ENCODE measurements at regions of chr15 and their contacts with region 1.

Region 1: DNA sequence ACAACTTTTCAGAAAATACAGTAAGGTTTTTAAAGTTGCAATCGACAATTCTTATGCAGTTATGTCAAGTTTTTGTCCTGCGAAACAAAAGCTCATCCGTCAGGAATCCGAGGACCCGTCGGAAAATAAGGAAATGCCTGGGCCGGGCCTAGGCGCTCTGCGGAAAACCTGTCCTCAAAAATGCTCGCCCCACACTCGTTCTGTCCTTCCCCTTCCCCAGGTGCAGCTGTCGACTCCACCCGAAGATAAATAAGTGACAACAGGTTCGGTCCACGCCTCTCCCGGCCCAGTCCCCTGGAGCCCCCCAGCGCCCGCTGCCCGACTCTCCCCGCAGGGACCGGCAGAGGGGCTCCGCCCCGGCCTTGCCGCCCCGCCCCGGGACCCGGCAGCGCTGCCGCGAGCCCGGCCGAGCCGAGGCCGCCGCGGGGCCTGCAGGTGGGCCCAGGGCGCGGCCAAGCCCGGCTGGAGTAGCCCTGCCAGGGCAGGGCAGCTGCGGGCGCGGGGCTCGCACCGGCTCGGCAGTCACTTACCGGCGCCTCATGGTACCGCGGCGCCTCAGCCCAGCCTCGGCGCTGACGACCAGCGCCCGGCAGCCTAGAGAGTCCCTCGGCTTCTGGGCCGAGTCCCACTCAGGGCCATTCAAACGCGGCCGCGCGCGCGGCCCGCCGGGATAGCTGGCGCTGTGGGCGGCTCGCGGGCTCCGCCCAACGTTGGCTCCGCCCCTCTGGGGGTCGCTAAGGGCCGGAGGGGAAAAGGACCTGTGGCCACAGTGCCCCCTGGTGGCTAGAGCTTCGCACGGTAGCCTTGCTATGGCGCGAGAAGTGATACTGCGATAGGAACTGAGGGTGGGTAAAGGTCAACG is at the start of gene KATNBL1:
- DNase-seq: peak; percentile 95 to 96
- H3K4me3 ChIP-seq: peak within 1 kb of the TSS; percentile 44
- H3K4me3 Mint-ChIP-seq: peak within 1 kb of the TSS; percentile 80
- H3K27ac Mint-ChIP-seq: peak within 1 kb of the TSS; percentile 87
- H3K4me1 ChIP-seq: peaks cover 8% of the 10 kb centered on the region; the same call in 1 of the 2 replicates
- H3K4me1 Mint-ChIP-seq: peaks cover 10% of the 10 kb centered on the region
- H3K27me3 ChIP-seq: no peaks in the 10 kb centered on the region
- H3K27me3 Mint-ChIP-seq: no peaks in the 10 kb centered on the region
- CTCF ChIP-seq: peak; percentile 88 to 93
- total RNA-seq, gene KATNBL1: 22.6 and 25.9 TPM in 2 replicates

Region 2: DNA sequence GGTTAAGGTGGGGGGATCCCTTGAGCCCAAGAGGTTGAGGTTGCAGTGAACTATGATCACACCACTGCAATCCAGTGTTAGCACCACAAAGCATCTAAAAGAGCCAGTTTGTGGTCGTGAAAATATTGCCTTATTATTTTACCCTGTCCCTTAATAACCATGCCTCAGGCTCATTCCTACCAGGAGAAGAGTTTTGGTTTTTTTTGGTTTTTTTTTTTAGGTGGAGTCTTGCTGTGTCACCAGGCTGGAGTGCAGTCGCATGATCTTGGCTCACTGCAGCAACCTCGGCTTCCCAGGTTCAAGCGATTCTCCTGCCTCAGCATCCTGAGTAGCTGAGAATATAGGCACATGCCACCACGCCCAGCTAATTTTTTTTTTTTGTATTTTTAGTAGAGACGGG is 152.7 kb before region 1 on chr15:
- CTCF ChIA-PET with region 1: no interaction called
- POLR2A ChIA-PET with region 1: no interaction called
- intact Hi-C with region 1: loop called (anchors 1 kb)
- DNase-seq: no peak
- H3K4me3 ChIP-seq: no peak overlapping the region
- H3K4me3 Mint-ChIP-seq: no peak overlapping the region
- H3K27ac Mint-ChIP-seq: no peak overlapping the region
- H3K4me1 ChIP-seq: no peaks in the 10 kb centered on the region
- H3K4me1 Mint-ChIP-seq: peaks cover 5% of the 10 kb centered on the region
- H3K27me3 ChIP-seq: no peaks in the 10 kb centered on the region
- H3K27me3 Mint-ChIP-seq: no peaks in the 10 kb centered on the region
- CTCF ChIP-seq: no peak

Region 3: DNA sequence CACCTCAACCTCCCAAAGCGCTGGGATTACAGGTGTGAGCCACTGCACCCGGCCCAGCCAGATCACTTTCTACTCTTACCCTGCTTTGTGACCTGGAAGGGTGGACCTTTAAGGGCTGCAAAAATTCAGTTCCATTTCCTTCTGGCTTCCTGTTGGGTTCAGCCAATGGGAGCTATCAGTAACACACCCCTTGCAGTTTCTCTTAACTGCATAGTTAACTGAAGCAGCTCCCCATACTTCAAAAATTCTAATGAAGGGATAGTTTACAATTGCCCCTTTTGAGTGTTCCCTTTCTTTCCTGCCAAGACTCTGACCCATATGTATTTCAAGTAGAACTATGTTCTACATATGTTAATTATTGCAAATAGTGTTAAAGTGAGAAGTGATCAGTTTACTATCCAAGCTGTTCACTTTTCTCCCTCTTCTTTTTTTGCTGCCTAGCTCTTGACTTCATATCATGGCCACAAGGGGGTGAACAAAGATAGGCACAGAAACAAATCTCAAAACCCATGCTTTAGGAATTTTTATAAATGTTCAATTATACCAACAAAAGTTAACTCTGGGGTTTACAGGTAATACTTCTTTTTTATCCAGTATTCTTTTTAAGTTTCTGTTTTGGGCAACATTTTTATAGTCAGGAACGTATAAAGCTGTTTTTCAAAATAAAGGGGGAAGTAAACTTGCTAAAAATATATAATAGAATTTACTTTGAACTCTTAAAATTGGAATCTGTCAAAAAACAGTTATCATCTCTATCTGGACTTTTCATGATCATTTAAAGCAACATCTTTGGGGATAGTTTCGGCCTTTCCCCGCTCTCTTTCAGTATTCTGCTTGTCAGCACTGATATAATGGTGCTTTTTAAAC is 99.6 kb before region 1 on chr15:
- CTCF ChIA-PET with region 1: interaction called, 37 read pairs
- POLR2A ChIA-PET with region 1: interaction called, 5 read pairs
- intact Hi-C with region 1: loop called (anchors 1 kb)
- DNase-seq: peak in 1 of 2 experiments; percentile 34
- H3K4me3 ChIP-seq: no peak overlapping the region
- H3K4me3 Mint-ChIP-seq: no peak overlapping the region
- H3K27ac Mint-ChIP-seq: no peak overlapping the region
- H3K4me1 ChIP-seq: no peaks in the 10 kb centered on the region
- H3K4me1 Mint-ChIP-seq: no peaks in the 10 kb centered on the region
- H3K27me3 ChIP-seq: no peaks in the 10 kb centered on the region
- H3K27me3 Mint-ChIP-seq: no peaks in the 10 kb centered on the region
- CTCF ChIP-seq: peak; percentile 40 to 73

Region 4: DNA sequence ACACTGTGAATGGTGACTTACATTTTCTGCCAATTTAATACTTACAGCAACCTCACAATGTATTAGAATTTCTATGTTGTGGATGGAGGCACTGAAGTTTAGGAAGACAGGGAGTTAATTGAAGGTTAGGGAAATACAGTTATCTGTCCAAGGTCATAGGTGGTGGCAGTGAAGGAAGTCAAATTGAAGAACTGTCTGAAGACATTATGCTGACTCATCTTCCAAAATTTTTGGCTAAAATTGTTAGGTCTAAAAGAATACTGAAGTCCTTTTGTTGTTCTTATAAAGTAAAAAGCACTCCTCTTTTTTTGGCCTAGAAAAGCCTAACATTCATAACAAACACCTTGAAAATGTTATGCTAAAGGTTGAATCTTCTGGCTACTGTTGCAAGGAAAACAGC is 42.9 kb after region 1 on chr15:
- CTCF ChIA-PET with region 1: no interaction called
- POLR2A ChIA-PET with region 1: no interaction called
- intact Hi-C with region 1: no loop called
- DNase-seq: no peak
- H3K4me3 ChIP-seq: no peak overlapping the region
- H3K4me3 Mint-ChIP-seq: no peak overlapping the region
- H3K27ac Mint-ChIP-seq: no peak overlapping the region
- H3K4me1 ChIP-seq: no peaks in the 10 kb centered on the region
- H3K4me1 Mint-ChIP-seq: peaks cover 10% of the 10 kb centered on the region
- H3K27me3 ChIP-seq: no peaks in the 10 kb centered on the region
- H3K27me3 Mint-ChIP-seq: no peaks in the 10 kb centered on the region
- CTCF ChIP-seq: no peak

Region 5: DNA sequence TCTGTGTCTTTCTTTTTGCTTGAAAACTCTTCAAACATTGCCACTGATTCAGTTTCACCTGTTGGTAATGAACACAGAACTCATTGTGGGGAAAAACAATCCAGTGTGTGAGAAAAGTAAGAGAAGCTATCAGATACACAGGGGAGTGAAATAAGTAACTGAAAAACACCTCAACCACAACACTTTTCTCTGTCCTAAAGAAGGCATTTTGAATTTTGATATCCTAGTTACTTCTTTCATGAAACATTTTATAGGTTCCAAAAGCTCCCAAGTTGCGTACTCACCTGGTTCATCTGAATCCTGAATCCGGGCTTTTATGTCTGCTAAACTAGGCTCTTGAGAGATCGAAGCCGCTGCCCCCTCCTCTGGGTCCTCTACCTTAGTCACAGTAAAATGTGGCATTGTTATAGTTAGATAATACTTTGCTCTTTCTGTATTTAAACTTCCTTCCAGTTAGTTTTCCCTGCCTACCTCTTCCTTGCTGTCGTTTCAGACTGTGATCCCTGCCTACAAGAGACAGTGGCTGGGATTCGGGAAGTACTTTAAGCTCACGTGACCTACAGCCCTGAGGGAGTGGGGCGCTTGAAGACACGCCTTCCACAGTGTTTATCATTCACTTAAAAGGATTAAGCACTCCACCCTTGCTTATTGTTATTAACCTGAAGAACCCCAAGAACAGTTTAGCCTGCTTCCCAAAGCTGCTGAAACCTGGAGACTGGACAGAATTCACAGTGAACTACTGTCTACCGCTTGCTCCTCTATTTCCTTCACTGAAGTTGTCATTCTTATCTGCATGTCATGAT is 108.8 kb after region 1 on chr15:
- CTCF ChIA-PET with region 1: no interaction called
- POLR2A ChIA-PET with region 1: interaction called, 10 read pairs
- intact Hi-C with region 1: no loop called
- DNase-seq: peak; percentile 64 to 74
- H3K4me3 ChIP-seq: peak overlapping the region; percentile 50
- H3K4me3 Mint-ChIP-seq: peak overlapping the region; percentile 84
- H3K27ac Mint-ChIP-seq: peak overlapping the region; percentile 66
- H3K4me1 ChIP-seq: 0 out of 2 replicates have a peak, but pooled peaks cover 4% of the 10 kb centered on the region
- H3K4me1 Mint-ChIP-seq: no peaks in the 10 kb centered on the region
- H3K27me3 ChIP-seq: no peaks in the 10 kb centered on the region
- H3K27me3 Mint-ChIP-seq: no peaks in the 10 kb centered on the region
- CTCF ChIP-seq: no peak

Measured in Caco-2 (cell line).